ENCODE measurements at regions of chr2 and their contacts with region 1.

Region 1: DNA sequence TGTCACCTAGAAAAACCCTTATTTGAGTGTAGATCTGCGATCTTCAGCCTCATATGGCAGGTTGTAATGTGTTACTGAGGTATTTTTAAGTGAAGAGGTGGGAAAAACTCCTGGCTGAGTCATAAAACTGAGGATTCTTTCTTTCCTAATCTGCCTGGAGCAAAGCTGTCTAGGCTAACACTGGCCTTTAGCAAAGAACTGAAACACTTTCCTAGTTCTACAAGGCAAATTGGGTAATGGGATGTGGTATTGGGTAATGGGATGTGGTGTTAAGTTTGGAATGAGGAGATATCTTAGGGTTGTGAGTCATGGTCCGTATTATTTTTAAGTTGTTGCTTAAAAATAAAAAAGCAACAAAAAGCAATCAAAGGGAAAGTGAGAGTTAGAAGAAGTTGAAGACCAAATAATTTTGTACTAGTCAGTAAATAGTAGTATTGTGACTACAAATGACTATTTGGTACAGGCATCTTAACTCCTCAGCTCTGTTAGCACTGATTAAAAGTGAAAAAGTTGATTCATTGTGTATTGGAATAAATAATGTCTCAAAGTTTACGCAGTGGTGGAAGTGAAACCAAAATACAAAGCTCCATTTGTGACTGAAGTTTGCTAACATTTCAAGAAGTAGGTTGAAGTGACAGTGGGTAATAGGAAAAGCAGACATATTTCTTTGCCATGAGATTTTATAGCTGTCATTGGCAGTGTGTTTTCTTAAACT is 216.8 kb downstream of the CAMKMT start:
- DNase-seq: no peak
- H3K4me3 Mint-ChIP-seq: peak overlapping the region; percentile 63
- H3K27ac Mint-ChIP-seq: peak overlapping the region; percentile 72
- H3K4me1 Mint-ChIP-seq: peaks cover 18% of the 10 kb centered on the region
- H3K27me3 Mint-ChIP-seq: no peaks in the 10 kb centered on the region

Region 2: GRCh38 chr2:44616667-44617155 is 38.1 kb after region 1 on chr2:
- intact Hi-C with region 1: loop called (anchors 1 kb)
- DNase-seq: peak; percentile 55
- H3K4me3 Mint-ChIP-seq: no peak overlapping the region
- H3K27ac Mint-ChIP-seq: no peak overlapping the region
- H3K4me1 Mint-ChIP-seq: peaks cover 9% of the 10 kb centered on the region
- H3K27me3 Mint-ChIP-seq: no peaks in the 10 kb centered on the region

Region 3: GRCh38 chr2:44833171-44834069 is 254.8 kb after region 1 on chr2:
- intact Hi-C with region 1: loop called (anchors 10 kb)
- DNase-seq: no peak
- H3K4me3 Mint-ChIP-seq: peak overlapping the region; percentile 15
- H3K27ac Mint-ChIP-seq: peak overlapping the region; percentile 72
- H3K4me1 Mint-ChIP-seq: peaks cover 22% of the 10 kb centered on the region
- H3K27me3 Mint-ChIP-seq: no peaks in the 10 kb centered on the region

Region 4: GRCh38 chr2:45494269-45494977 is 915.8 kb after region 1 on chr2:
- intact Hi-C with region 1: loop called (anchors 5 kb)
- DNase-seq: peak; percentile 70
- H3K4me3 Mint-ChIP-seq: no peak overlapping the region
- H3K27ac Mint-ChIP-seq: no peak overlapping the region
- H3K4me1 Mint-ChIP-seq: peaks cover 22% of the 10 kb centered on the region
- H3K27me3 Mint-ChIP-seq: no peaks in the 10 kb centered on the region

Measured in activated CD4-positive, alpha-beta T cell treated with anti-CD3 and anti-CD28 coated beads, Interleukin-2, amount 10 ng/mL, durations not matched to agents 24 days and 14 days (primary cell).